Activated CD4-positive, alpha-beta memory T cell treated with anti-CD3 and anti-CD28 coated beads, Interleukin-2, amount 10 ng/mL, durations not matched to agents 7 days and 5 days (primary cell): ENCODE measurements at regions of chr17 and their contacts with region 1.

Region 1: GRCh38 chr17:8248751-8249607 is at the start of gene PFAS:
- DNase-seq: peak; percentile 96
- H3K4me3 Mint-ChIP-seq: peak within 1 kb of the TSS; percentile 94
- H3K27ac Mint-ChIP-seq: peak within 1 kb of the TSS; percentile 100
- H3K4me1 Mint-ChIP-seq: peaks cover 50% of the 10 kb centered on the region
- H3K27me3 Mint-ChIP-seq: no peaks in the 10 kb centered on the region
- total RNA-seq, gene PFAS: 43.6 to 45.9 TPM

Region 2: GRCh38 chr17:8162233-8162996 is 86.6 kb before region 1 on chr17 and contains the start of gene VAMP2:
- CTCF ChIA-PET with region 1: no interaction called
- POLR2A ChIA-PET with region 1: interaction called, 11 read pairs
- DNase-seq: peak; percentile 89
- H3K4me3 Mint-ChIP-seq: peak within 1 kb of the TSS; percentile 81
- H3K27ac Mint-ChIP-seq: peak within 1 kb of the TSS; percentile 98
- H3K4me1 Mint-ChIP-seq: peaks cover 59% of the 10 kb centered on the region
- H3K27me3 Mint-ChIP-seq: no peaks in the 10 kb centered on the region
- total RNA-seq, gene VAMP2: 75.2 to 79.1 TPM

Region 3: GRCh38 chr17:8209909-8210760 is 38.8 kb before region 1 on chr17 and contains the start of gene AURKB:
- CTCF ChIA-PET with region 1: interaction called, 3 read pairs
- POLR2A ChIA-PET with region 1: interaction called, 43 read pairs
- DNase-seq: peak; percentile 94
- H3K4me3 Mint-ChIP-seq: peak within 1 kb of the TSS; percentile 87
- H3K27ac Mint-ChIP-seq: peak within 1 kb of the TSS; percentile 86
- H3K4me1 Mint-ChIP-seq: peaks cover 39% of the 10 kb centered on the region
- H3K27me3 Mint-ChIP-seq: no peaks in the 10 kb centered on the region
- total RNA-seq, gene AURKB: 160 to 167 TPM

Region 4: GRCh38 chr17:8288336-8289102 is 39.5 kb after region 1 on chr17 and contains the start of gene RANGRF:
- CTCF ChIA-PET with region 1: interaction called, 5 read pairs
- POLR2A ChIA-PET with region 1: interaction called, 132 read pairs
- DNase-seq: peak; percentile 88
- H3K4me3 Mint-ChIP-seq: peak within 1 kb of the TSS; percentile 94
- H3K27ac Mint-ChIP-seq: peak within 1 kb of the TSS; percentile 83
- H3K4me1 Mint-ChIP-seq: peaks cover 65% of the 10 kb centered on the region
- H3K27me3 Mint-ChIP-seq: no peaks in the 10 kb centered on the region
- total RNA-seq, gene RANGRF: 45.4 to 49.4 TPM

Region 5: GRCh38 chr17:8300627-8301242 is 51.8 kb after region 1 on chr17:
- CTCF ChIA-PET with region 1: interaction called, 22 read pairs
- POLR2A ChIA-PET with region 1: interaction called, 132 read pairs
- DNase-seq: peak; percentile 68
- H3K4me3 Mint-ChIP-seq: no peak overlapping the region
- H3K27ac Mint-ChIP-seq: no peak overlapping the region
- H3K4me1 Mint-ChIP-seq: peaks cover 20% of the 10 kb centered on the region
- H3K27me3 Mint-ChIP-seq: no peaks in the 10 kb centered on the region

Region 6: GRCh38 chr17:8311131-8311790 is 62.3 kb after region 1 on chr17:
- CTCF ChIA-PET with region 1: no interaction called
- POLR2A ChIA-PET with region 1: no interaction called
- DNase-seq: no peak
- H3K4me3 Mint-ChIP-seq: no peak overlapping the region
- H3K27ac Mint-ChIP-seq: no peak overlapping the region
- H3K4me1 Mint-ChIP-seq: peaks cover 3% of the 10 kb centered on the region
- H3K27me3 Mint-ChIP-seq: peaks cover 15% of the 10 kb centered on the region

Region 7: GRCh38 chr17:8443756-8444155 is 194.8 kb after region 1 on chr17:
- CTCF ChIA-PET with region 1: no interaction called
- POLR2A ChIA-PET with region 1: no interaction called
- DNase-seq: no peak
- H3K4me3 Mint-ChIP-seq: no peak overlapping the region
- H3K27ac Mint-ChIP-seq: no peak overlapping the region
- H3K4me1 Mint-ChIP-seq: peaks cover 36% of the 10 kb centered on the region
- H3K27me3 Mint-ChIP-seq: no peaks in the 10 kb centered on the region

Region 8: GRCh38 chr17:8954339-8954738 is 705.4 kb after region 1 on chr17:
- CTCF ChIA-PET with region 1: no interaction called
- POLR2A ChIA-PET with region 1: no interaction called
- DNase-seq: peak; percentile 78
- H3K4me3 Mint-ChIP-seq: peak overlapping the region; percentile 36
- H3K27ac Mint-ChIP-seq: peak overlapping the region; percentile 73
- H3K4me1 Mint-ChIP-seq: peaks cover 97% of the 10 kb centered on the region
- H3K27me3 Mint-ChIP-seq: no peaks in the 10 kb centered on the region